MCF 10A (cell line): ENCODE measurements at regions of chr5 and their contacts with region 1.

Region 1: GRCh38 chr5:179678223-179679013 is 2.4 kb downstream of the CBY3 start:
- DNase-seq: peak; percentile 97
- H3K4me3 Mint-ChIP-seq: peak overlapping the region; percentile 99
- H3K27ac Mint-ChIP-seq: peak overlapping the region; percentile 95
- H3K4me1 Mint-ChIP-seq: peaks cover 18% of the 10 kb centered on the region
- H3K27me3 Mint-ChIP-seq: no peaks in the 10 kb centered on the region
- CTCF ChIP-seq: no peak

Region 2: DNA sequence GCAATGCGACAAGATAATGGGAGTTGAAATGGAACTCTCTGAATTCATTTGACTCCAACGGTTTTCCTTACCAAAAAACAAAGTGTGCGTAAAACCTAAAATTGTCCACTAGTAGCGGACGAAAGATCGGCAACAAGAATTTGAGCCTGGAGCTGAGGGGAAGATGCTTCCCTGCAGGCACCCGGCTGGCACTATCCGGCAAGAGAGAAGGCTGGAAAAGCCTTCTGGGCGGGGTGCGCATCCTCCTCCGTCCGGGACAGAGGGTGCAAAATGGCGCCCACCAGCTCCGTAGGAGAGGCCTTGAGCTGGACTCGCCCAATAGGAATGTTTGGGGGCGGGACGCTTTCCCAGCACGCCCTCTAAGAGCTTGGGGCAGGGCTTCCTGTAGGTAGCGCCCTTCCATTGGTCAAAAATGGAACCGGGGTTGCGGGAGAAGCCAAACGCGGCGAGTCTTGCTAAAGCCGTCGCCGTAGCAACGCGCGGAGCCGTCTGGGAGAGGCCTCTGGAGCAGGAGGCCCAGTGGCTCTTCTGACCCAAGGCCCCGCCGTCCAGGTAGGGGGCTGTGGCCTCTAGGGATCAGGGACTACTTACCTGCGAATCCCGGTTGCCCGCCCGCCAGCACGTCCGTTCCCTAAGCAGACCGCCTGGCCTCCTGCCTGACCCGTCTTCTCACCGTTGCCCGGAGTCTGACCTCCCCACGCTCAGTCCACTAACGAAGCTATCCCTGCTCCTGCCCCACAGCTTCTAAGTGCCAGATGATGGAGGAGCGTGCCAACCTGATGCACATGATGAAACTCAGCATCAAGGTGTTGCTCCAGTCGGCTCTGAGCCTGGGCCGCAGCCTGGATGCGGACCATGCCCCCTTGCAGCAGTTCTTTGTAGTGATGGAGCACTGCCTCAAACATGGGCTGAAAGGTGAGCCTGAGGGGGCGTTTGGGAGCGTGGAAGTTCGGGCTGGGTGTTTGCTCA is 118.8 kb before region 1 on chr5:
- CTCF ChIA-PET with region 1: no interaction called
- POLR2A ChIA-PET with region 1: interaction called, 10 read pairs
- intact Hi-C with region 1: no loop called
- DNase-seq: peak; percentile 100
- H3K4me3 Mint-ChIP-seq: peak overlapping the region; percentile 98
- H3K27ac Mint-ChIP-seq: peak overlapping the region; percentile 98
- H3K4me1 Mint-ChIP-seq: peaks cover 19% of the 10 kb centered on the region
- H3K27me3 Mint-ChIP-seq: no peaks in the 10 kb centered on the region
- CTCF ChIP-seq: no peak

Region 3: GRCh38 chr5:179668391-179668790 is 10.0 kb before region 1 on chr5:
- CTCF ChIA-PET with region 1: interaction called, 10 read pairs
- POLR2A ChIA-PET with region 1: interaction called, 7 read pairs
- intact Hi-C with region 1: no loop called
- DNase-seq: peak; percentile 65
- H3K4me3 Mint-ChIP-seq: no peak overlapping the region
- H3K27ac Mint-ChIP-seq: peak overlapping the region; percentile 40
- H3K4me1 Mint-ChIP-seq: no peaks in the 10 kb centered on the region
- H3K27me3 Mint-ChIP-seq: no peaks in the 10 kb centered on the region
- CTCF ChIP-seq: peak; percentile 54

Region 4: GRCh38 chr5:179697993-179698934 is 19.8 kb after region 1 on chr5:
- CTCF ChIA-PET with region 1: interaction called, 8 read pairs
- POLR2A ChIA-PET with region 1: interaction called, 61 read pairs
- intact Hi-C with region 1: loop called (anchors 2 kb)
- DNase-seq: peak; percentile 100
- H3K4me3 Mint-ChIP-seq: peak overlapping the region; percentile 94
- H3K27ac Mint-ChIP-seq: peak overlapping the region; percentile 99
- H3K4me1 Mint-ChIP-seq: peaks cover 29% of the 10 kb centered on the region
- H3K27me3 Mint-ChIP-seq: no peaks in the 10 kb centered on the region
- CTCF ChIP-seq: no peak

Region 5: GRCh38 chr5:179806250-179807222 is 128.1 kb after region 1 on chr5 and contains the start of gene MGAT4B:
- CTCF ChIA-PET with region 1: no interaction called
- POLR2A ChIA-PET with region 1: interaction called, 10 read pairs
- intact Hi-C with region 1: no loop called
- DNase-seq: peak; percentile 87
- H3K4me3 Mint-ChIP-seq: peak within 1 kb of the TSS; percentile 82
- H3K27ac Mint-ChIP-seq: peak within 1 kb of the TSS; percentile 92
- H3K4me1 Mint-ChIP-seq: peaks cover 29% of the 10 kb centered on the region
- H3K27me3 Mint-ChIP-seq: no peaks in the 10 kb centered on the region
- CTCF ChIP-seq: no peak
- total RNA-seq, gene MGAT4B: 153 and 198 TPM in 2 replicates

Region 6: GRCh38 chr5:180172450-180173197 is 494.2 kb after region 1 on chr5:
- CTCF ChIA-PET with region 1: no interaction called
- POLR2A ChIA-PET with region 1: no interaction called
- intact Hi-C with region 1: no loop called
- DNase-seq: peak; percentile 28
- H3K4me3 Mint-ChIP-seq: no peak overlapping the region
- H3K27ac Mint-ChIP-seq: no peak overlapping the region
- H3K4me1 Mint-ChIP-seq: peaks cover 6% of the 10 kb centered on the region
- H3K27me3 Mint-ChIP-seq: peaks cover 7% of the 10 kb centered on the region
- CTCF ChIP-seq: no peak